PC-9 (cell line): ENCODE measurements at regions of chr10 and their contacts with region 1.

Region 1: DNA sequence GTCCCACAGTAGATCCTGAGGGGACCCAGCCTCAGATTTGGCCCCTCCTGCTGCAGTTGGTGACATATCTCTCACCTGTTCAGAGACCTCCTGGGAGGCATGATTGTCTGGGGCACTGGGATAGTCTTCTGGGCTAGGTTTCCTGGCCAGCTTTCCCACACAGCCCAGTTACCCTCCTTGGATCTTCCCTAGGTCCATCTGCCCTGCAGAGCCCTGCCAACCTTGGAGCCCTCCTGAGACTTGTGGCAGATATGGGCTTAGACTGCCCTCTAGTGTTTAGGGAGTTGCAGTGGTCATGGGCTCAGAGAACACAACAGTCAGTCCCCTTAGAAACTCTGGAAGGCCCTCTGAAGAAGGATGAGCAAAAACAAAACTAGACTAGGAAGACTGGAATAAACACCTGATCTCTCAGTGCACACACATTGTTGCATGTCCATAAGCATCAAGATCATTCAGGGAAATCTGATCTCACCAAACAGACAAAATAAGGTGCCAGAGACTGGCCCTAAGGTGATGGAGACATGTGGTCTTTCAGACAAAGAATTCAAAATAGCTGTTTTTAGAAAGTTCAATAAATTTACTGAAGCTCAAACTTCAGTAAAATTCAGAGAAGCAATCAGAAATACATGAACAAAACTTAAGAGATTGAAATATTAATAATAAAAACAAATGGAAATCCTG is 324.6 kb downstream of the ATRNL1 start:
- DNase-seq: peak in 1 of 2 experiments; percentile 17
- H3K4me3 ChIP-seq: no peak overlapping the region
- H3K27ac ChIP-seq: no peak overlapping the region
- H3K4me1 ChIP-seq: no peaks in the 10 kb centered on the region
- H3K27me3 ChIP-seq: no peaks in the 10 kb centered on the region
- CTCF ChIP-seq: peak; percentile 63

Region 2: GRCh38 chr10:115141254-115141653 is 276.5 kb before region 1 on chr10:
- CTCF ChIA-PET with region 1: no interaction called
- POLR2A ChIA-PET with region 1: no interaction called
- intact Hi-C with region 1: loop called (anchors 10 kb)
- DNase-seq: no peak
- H3K4me3 ChIP-seq: no peak overlapping the region
- H3K27ac ChIP-seq: no peak overlapping the region
- H3K4me1 ChIP-seq: no peaks in the 10 kb centered on the region
- H3K27me3 ChIP-seq: no peaks in the 10 kb centered on the region
- CTCF ChIP-seq: peak; percentile 53